ENCODE measurements at regions of chr2 and their contacts with region 1.

Region 1: DNA sequence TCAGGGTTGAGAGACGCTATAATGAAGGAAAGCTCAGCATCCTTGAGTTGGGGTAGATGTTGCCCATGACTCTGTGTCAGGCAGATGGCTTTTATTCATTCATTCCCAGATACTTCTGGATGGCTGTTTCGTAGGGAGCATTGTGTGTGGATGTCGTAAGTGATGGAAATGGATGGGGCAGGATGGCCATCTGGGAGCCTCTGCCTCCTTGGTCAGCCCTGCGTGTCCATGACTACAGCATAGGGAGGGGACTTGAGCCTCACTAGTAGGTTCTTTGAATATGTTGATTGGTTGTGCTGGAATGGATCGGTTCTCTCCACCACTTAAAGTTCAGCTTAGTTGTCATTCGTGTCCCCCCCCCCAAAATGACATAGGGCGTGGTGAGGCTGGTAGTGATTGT is 44.9 kb downstream of the TGOLN2 start:
- DNase-seq: no peak
- H3K4me3 ChIP-seq: no peak overlapping the region
- H3K27ac ChIP-seq: no peak overlapping the region
- H3K4me1 ChIP-seq: no peaks in the 10 kb centered on the region
- H3K27me3 ChIP-seq: no peaks in the 10 kb centered on the region
- CTCF ChIP-seq: no peak
- POLR2A ChIP-seq: no peak

Region 2: GRCh38 chr2:85132834-85133637 is 149.9 kb before region 1 on chr2 and contains the start of gene TCF7L1:
- intact Hi-C with region 1: loop called (anchors 2 kb)
- DNase-seq: peak; percentile 82
- H3K4me3 ChIP-seq: peak within 1 kb of the TSS; percentile 50 to 57
- H3K27ac ChIP-seq: peak within 1 kb of the TSS; percentile 74 to 75
- H3K4me1 ChIP-seq: no peaks in the 10 kb centered on the region
- H3K27me3 ChIP-seq: no peaks in the 10 kb centered on the region
- CTCF ChIP-seq: peak; percentile 79 to 89 (median 87)
- POLR2A ChIP-seq: peak; percentile 41
- total RNA-seq, gene TCF7L1: 2.6 to 7.0 TPM

Region 3: DNA sequence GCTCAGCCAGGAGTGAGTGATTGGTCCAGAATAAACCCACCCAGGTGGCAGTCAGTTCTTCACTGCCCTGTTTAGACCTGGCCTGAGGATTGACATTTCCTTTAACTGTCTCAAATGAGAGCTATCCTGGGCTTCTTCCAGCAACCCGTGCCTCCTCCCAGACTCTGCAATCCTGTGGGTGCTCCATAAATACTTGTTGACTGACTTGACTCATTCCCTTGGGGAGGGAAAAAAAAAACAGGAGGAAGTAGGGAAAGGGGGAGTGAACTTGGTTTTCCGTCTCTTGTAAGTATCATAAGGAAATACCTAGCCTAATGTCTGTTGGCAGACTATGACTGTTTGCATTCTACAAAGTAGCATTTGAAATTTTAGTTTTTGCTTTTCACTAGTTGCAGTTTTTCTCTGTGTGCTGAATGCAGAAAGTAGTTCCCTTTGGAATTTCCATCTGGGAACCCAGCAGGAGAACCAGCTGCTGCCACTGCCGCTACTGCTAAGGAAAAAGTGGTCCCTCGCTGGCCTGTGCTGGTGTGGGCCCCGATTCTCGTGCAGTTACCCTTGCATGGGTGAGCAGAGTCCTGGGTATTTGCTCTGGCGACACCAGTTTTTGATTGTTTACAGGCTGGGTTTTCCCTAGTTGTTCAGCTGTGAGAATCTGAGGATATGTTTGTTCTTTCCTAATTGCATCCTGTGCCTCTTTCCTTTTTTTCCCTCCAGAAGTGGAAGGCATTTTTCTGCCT is 34.0 kb before region 1 on chr2:
- intact Hi-C with region 1: loop called (anchors 5 kb)
- DNase-seq: peak; percentile 59
- H3K4me3 ChIP-seq: no peak overlapping the region
- H3K27ac ChIP-seq: peak overlapping the region; percentile 59 to 62
- H3K4me1 ChIP-seq: no peaks in the 10 kb centered on the region
- H3K27me3 ChIP-seq: no peaks in the 10 kb centered on the region
- CTCF ChIP-seq: no peak
- POLR2A ChIP-seq: no peak

Measured in prostate gland (tissue), 2 donors.